A673 (cell line): ENCODE measurements at regions of chr11 and their contacts with region 1.

Region 1: GRCh38 chr11:66386171-66387069 is 14.9 kb upstream of the SLC29A2 start:
- DNase-seq: peak; percentile 93
- H3K4me3 ChIP-seq: peak overlapping the region; percentile 26
- H3K27ac ChIP-seq: no peak overlapping the region
- H3K4me1 ChIP-seq: peaks cover 2% of the 10 kb centered on the region
- H3K27me3 ChIP-seq: no peaks in the 10 kb centered on the region
- CTCF ChIP-seq: peak; percentile 99

Region 2: GRCh38 chr11:66112601-66113098 is 273.8 kb before region 1 on chr11:
- CTCF ChIA-PET with region 1: no interaction called
- POLR2A ChIA-PET with region 1: no interaction called
- intact Hi-C with region 1: no loop called
- DNase-seq: peak; percentile 39
- H3K4me3 ChIP-seq: no peak overlapping the region
- H3K27ac ChIP-seq: peak overlapping the region; percentile 62
- H3K4me1 ChIP-seq: peaks cover 53% of the 10 kb centered on the region
- H3K27me3 ChIP-seq: no peaks in the 10 kb centered on the region
- CTCF ChIP-seq: no peak

Region 3: DNA sequence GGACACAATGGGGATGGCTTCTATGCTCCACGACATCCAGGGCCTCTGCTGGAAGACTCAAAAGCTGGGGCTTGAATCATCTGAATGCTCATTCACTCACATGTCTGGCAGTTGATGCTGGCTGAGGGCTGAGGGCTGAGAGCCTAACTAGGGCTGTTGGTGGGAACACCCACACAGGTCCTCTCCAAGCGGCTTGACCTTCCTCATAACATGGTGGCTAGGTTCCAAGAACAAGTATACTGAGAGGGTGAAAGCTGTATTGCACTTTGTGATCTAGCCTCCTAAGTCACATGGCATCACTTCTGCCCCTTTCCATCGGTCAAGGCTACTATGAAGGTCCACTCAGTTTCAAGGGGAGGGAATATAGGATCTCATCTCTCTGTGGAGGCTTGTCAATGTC is 87.2 kb before region 1 on chr11:
- CTCF ChIA-PET with region 1: no interaction called
- POLR2A ChIA-PET with region 1: no interaction called
- intact Hi-C with region 1: no loop called
- DNase-seq: no peak
- H3K4me3 ChIP-seq: no peak overlapping the region
- H3K27ac ChIP-seq: no peak overlapping the region
- H3K4me1 ChIP-seq: no peaks in the 10 kb centered on the region
- H3K27me3 ChIP-seq: no peaks in the 10 kb centered on the region
- CTCF ChIP-seq: no peak

Region 4: GRCh38 chr11:66344550-66345315 is 41.7 kb before region 1 on chr11 and contains the start of gene BRMS1:
- CTCF ChIA-PET with region 1: interaction called, 10 read pairs
- POLR2A ChIA-PET with region 1: no interaction called
- intact Hi-C with region 1: no loop called
- DNase-seq: peak; percentile 98
- H3K4me3 ChIP-seq: peak within 1 kb of the TSS; percentile 78
- H3K27ac ChIP-seq: peak within 1 kb of the TSS; percentile 87
- H3K4me1 ChIP-seq: peaks cover 32% of the 10 kb centered on the region
- H3K27me3 ChIP-seq: no peaks in the 10 kb centered on the region
- CTCF ChIP-seq: 0 out of 2 replicates have a peak, but pooled peaks have one; percentile 18
- total RNA-seq, gene BRMS1: 76.8 and 93.5 TPM in 2 replicates

Region 5: GRCh38 chr11:66438504-66439466 is 52.4 kb after region 1 on chr11 and contains the start of gene MRPL11:
- CTCF ChIA-PET with region 1: interaction called, 12 read pairs
- POLR2A ChIA-PET with region 1: no interaction called
- intact Hi-C with region 1: loop called (anchors 5 kb)
- DNase-seq: peak; percentile 97
- H3K4me3 ChIP-seq: peak within 1 kb of the TSS; percentile 66
- H3K27ac ChIP-seq: peak within 1 kb of the TSS; percentile 85
- H3K4me1 ChIP-seq: peaks cover 4% of the 10 kb centered on the region
- H3K27me3 ChIP-seq: no peaks in the 10 kb centered on the region
- CTCF ChIP-seq: peak; percentile 89
- total RNA-seq, gene MRPL11: 96.5 and 97.9 TPM in 2 replicates

Region 6: GRCh38 chr11:66548774-66549630 is 162.6 kb after region 1 on chr11:
- CTCF ChIA-PET with region 1: interaction called, 16 read pairs
- POLR2A ChIA-PET with region 1: no interaction called
- intact Hi-C with region 1: no loop called
- DNase-seq: no peak
- H3K4me3 ChIP-seq: no peak overlapping the region
- H3K27ac ChIP-seq: no peak overlapping the region
- H3K4me1 ChIP-seq: peaks cover 4% of the 10 kb centered on the region
- H3K27me3 ChIP-seq: no peaks in the 10 kb centered on the region
- CTCF ChIP-seq: no peak

Region 7: GRCh38 chr11:67062308-67063063 is 676.1 kb after region 1 on chr11:
- CTCF ChIA-PET with region 1: no interaction called
- POLR2A ChIA-PET with region 1: no interaction called
- intact Hi-C with region 1: no loop called
- DNase-seq: no peak
- H3K4me3 ChIP-seq: no peak overlapping the region
- H3K27ac ChIP-seq: no peak overlapping the region
- H3K4me1 ChIP-seq: no peaks in the 10 kb centered on the region
- H3K27me3 ChIP-seq: no peaks in the 10 kb centered on the region
- CTCF ChIP-seq: no peak